ENCODE measurements at regions of chr3 and their contacts with region 1.

Region 1: GRCh38 chr3:36876181-36876936 is 68.5 kb downstream of the TRANK1 start:
- DNase-seq: peak; percentile 26
- H3K4me3 Mint-ChIP-seq: peak overlapping the region; percentile 26
- H3K27ac Mint-ChIP-seq: peak overlapping the region; percentile 69
- H3K4me1 Mint-ChIP-seq: peaks cover 32% of the 10 kb centered on the region
- H3K27me3 Mint-ChIP-seq: no peaks in the 10 kb centered on the region

Region 2: DNA sequence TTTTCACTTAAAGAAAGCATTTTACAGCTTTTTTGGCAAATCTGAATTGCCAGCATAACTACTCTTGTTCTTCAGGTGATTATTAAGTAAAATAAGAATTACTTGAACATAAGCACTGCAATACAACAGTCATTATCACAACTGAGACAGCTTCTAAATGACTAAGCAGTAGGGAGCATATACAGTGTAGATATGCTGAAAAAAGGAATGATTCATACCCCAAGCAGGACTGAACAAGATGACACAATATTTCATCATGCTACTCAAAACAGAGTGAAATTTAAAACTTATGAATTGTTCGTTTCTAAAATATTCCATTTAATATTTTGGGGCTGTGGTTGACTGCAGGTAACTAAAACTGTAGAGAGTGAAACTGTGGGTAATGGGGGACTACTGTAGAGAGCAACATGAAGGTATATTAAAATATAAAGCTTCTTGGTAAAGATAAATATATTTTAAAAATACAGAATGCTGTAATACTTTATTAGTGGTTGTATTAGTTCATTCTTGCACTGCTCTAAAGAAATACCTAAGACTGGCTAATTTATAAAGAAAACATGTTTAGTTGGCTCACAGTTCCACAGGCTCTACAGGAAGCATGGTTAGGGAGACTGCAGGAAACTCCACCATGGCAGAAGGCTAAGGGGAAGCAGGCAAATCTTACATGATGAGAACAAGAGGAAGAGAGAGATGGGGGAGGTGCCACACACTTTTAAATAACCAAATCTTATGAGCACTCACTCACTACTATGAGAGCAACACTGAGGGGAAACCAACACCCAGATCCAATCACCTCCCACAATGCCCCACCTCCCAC is 196.8 kb before region 1 on chr3:
- CTCF ChIA-PET with region 1: no interaction called
- intact Hi-C with region 1: loop called (anchors 1 kb)
- DNase-seq: no peak
- H3K4me3 Mint-ChIP-seq: no peak overlapping the region
- H3K27ac Mint-ChIP-seq: peak overlapping the region; percentile 82
- H3K4me1 Mint-ChIP-seq: no peaks in the 10 kb centered on the region
- H3K27me3 Mint-ChIP-seq: peaks cover 3% of the 10 kb centered on the region

Region 3: DNA sequence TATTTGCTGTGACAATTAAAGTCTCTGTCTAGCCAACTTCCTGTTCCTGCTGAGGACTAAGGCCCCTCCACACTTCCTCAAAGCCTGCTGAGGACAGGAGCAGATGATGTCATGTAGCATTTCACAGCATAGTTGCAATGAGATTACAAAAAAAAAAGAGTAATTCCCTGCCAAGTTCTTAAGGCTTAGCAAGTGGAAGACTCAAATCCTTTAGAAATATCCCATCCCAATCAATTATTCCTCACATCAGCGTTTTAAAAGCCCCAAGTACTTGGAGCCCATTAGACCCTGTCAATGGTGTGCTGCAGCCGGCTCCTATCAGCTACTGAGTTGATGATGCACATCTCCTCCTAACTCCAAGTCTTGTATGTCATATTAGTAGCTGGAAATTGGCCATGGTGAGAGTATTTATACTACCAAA is 16.8 kb after region 1 on chr3:
- CTCF ChIA-PET with region 1: interaction called, 3 read pairs
- intact Hi-C with region 1: loop called (anchors 1 kb)
- DNase-seq: peak; percentile 55
- H3K4me3 Mint-ChIP-seq: no peak overlapping the region
- H3K27ac Mint-ChIP-seq: peak overlapping the region; percentile 72
- H3K4me1 Mint-ChIP-seq: peaks cover 41% of the 10 kb centered on the region
- H3K27me3 Mint-ChIP-seq: no peaks in the 10 kb centered on the region

Region 4: DNA sequence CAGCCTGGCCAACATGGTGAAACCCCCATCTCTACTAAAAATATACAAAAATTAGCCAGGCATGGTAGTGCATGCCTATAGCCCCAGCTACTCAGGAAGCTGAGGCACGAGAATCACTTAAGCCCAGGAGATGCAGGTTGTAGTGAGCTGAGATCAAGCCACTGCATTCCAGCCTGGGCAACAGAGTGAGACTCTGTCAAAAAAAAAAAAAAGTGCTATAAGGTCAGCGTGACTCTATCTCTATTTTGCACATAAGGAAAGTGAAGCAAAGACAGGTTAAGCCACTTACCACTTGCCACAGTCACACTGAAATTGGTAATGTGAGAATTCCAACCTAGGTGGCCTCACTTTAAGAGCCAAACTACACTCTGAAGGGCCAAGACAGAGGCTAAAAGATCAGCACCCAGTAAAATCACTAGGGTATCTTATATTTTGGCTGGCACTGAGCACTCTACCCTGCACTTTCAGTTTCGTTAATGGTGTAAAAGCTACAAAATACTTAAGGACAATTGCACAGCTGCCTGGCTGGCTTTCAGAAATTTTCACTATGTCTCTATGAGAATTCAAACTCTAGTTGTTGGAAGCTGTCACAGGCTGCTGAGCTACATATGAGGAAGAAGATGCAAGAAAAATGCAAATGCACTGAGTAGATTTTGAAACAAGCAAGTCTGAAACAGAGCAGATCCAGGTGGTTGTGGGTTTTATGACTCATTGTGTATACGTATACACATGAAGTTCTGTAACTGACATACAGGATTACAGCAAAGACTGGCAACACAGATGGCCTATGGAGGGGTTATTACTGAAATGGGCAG is 35.8 kb after region 1 on chr3:
- CTCF ChIA-PET with region 1: interaction called, 12 read pairs
- intact Hi-C with region 1: loop called (anchors 1 kb)
- DNase-seq: peak; percentile 66
- H3K4me3 Mint-ChIP-seq: peak overlapping the region; percentile 25
- H3K27ac Mint-ChIP-seq: peak overlapping the region; percentile 41
- H3K4me1 Mint-ChIP-seq: peaks cover 43% of the 10 kb centered on the region
- H3K27me3 Mint-ChIP-seq: no peaks in the 10 kb centered on the region

Region 5: GRCh38 chr3:36944012-36944640 is 67.8 kb after region 1 on chr3:
- CTCF ChIA-PET with region 1: no interaction called
- intact Hi-C with region 1: loop called (anchors 1 kb)
- DNase-seq: peak; percentile 53
- H3K4me3 Mint-ChIP-seq: peak overlapping the region; percentile 78
- H3K27ac Mint-ChIP-seq: no peak overlapping the region
- H3K4me1 Mint-ChIP-seq: peaks cover 10% of the 10 kb centered on the region
- H3K27me3 Mint-ChIP-seq: no peaks in the 10 kb centered on the region

Region 6: DNA sequence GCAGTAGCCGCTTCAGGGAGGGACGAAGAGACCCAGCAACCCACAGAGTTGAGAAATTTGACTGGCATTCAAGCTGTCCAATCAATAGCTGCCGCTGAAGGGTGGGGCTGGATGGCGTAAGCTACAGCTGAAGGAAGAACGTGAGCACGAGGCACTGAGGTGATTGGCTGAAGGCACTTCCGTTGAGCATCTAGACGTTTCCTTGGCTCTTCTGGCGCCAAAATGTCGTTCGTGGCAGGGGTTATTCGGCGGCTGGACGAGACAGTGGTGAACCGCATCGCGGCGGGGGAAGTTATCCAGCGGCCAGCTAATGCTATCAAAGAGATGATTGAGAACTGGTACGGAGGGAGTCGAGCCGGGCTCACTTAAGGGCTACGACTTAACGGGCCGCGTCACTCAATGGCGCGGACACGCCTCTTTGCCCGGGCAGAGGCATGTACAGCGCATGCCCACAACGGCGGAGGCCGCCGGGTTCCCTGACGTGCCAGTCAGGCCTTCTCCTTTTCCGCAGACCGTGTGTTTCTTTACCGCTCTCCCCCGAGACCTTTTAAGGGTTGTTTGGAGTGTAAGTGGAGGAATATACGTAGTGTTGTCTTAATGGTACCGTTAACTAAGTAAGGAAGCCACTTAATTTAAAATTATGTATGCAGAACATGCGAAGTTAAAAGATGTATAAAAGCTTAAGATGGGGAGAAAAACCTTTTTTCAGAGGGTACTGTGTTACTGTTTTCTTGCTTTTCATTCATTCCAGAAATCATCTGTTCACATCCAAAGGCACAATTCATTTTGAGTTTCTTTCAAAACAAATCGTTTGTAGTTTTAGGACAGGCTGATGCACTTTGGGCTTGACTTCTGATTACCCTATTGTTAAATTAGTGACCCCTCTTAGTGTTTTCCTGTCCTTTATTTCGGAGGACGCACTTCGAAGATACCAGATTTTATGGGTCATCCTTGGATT is 117.2 kb after region 1 on chr3 and contains the start of gene MLH1:
- CTCF ChIA-PET with region 1: interaction called, 3 read pairs
- intact Hi-C with region 1: loop called (anchors 1 kb)
- DNase-seq: peak; percentile 100
- H3K4me3 Mint-ChIP-seq: no peak within 1 kb of the TSS
- H3K27ac Mint-ChIP-seq: no peak within 1 kb of the TSS
- H3K4me1 Mint-ChIP-seq: peaks cover 45% of the 10 kb centered on the region
- H3K27me3 Mint-ChIP-seq: no peaks in the 10 kb centered on the region
- total RNA-seq, gene MLH1: 86.6 to 95.3 TPM

Region 7: GRCh38 chr3:37174532-37175126 is 298.3 kb after region 1 on chr3 and contains the start of gene LRRFIP2:
- CTCF ChIA-PET with region 1: no interaction called
- intact Hi-C with region 1: loop called (anchors 1 kb)
- DNase-seq: peak; percentile 49
- H3K4me3 Mint-ChIP-seq: peak within 1 kb of the TSS; percentile 82
- H3K27ac Mint-ChIP-seq: peak within 1 kb of the TSS; percentile 50
- H3K4me1 Mint-ChIP-seq: peaks cover 43% of the 10 kb centered on the region
- H3K27me3 Mint-ChIP-seq: no peaks in the 10 kb centered on the region
- total RNA-seq, gene LRRFIP2: 13.3 to 15.3 TPM

Measured in activated naive CD4-positive, alpha-beta T cell treated with anti-CD3 and anti-CD28 coated beads for 36 hours (primary cell).